Panc1 (cell line): ENCODE measurements at regions of chr3 and their contacts with region 1.

Region 1: GRCh38 chr3:64533617-64534317 is 154.0 kb downstream of the ADAMTS9 start:
- DNase-seq: peak; percentile 38
- ATAC-seq: peak; percentile 97
- H3K4me3 ChIP-seq: no peak overlapping the region
- H3K27ac ChIP-seq: no peak overlapping the region
- H3K4me1 ChIP-seq: no peaks in the 10 kb centered on the region
- H3K27me3 ChIP-seq: peaks cover 8% of the 10 kb centered on the region
- CTCF ChIP-seq: peak; percentile 81

Region 2: GRCh38 chr3:64058566-64058965 is 475.2 kb before region 1 on chr3:
- CTCF ChIA-PET with region 1: interaction called, 22 read pairs
- POLR2A ChIA-PET with region 1: no interaction called
- in situ Hi-C with region 1: no loop called
- intact Hi-C with region 1: no loop called
- DNase-seq: no peak
- ATAC-seq: no peak
- H3K4me3 ChIP-seq: no peak overlapping the region
- H3K27ac ChIP-seq: no peak overlapping the region
- H3K4me1 ChIP-seq: no peaks in the 10 kb centered on the region
- H3K27me3 ChIP-seq: no peaks in the 10 kb centered on the region
- CTCF ChIP-seq: no peak

Region 3: GRCh38 chr3:64666171-64666588 is 132.4 kb after region 1 on chr3:
- CTCF ChIA-PET with region 1: no interaction called
- POLR2A ChIA-PET with region 1: no interaction called
- in situ Hi-C with region 1: no loop called
- intact Hi-C with region 1: no loop called
- DNase-seq: no peak
- ATAC-seq: no peak
- H3K4me3 ChIP-seq: no peak overlapping the region
- H3K27ac ChIP-seq: no peak overlapping the region
- H3K4me1 ChIP-seq: no peaks in the 10 kb centered on the region
- H3K27me3 ChIP-seq: no peaks in the 10 kb centered on the region
- CTCF ChIP-seq: no peak

Region 4: DNA sequence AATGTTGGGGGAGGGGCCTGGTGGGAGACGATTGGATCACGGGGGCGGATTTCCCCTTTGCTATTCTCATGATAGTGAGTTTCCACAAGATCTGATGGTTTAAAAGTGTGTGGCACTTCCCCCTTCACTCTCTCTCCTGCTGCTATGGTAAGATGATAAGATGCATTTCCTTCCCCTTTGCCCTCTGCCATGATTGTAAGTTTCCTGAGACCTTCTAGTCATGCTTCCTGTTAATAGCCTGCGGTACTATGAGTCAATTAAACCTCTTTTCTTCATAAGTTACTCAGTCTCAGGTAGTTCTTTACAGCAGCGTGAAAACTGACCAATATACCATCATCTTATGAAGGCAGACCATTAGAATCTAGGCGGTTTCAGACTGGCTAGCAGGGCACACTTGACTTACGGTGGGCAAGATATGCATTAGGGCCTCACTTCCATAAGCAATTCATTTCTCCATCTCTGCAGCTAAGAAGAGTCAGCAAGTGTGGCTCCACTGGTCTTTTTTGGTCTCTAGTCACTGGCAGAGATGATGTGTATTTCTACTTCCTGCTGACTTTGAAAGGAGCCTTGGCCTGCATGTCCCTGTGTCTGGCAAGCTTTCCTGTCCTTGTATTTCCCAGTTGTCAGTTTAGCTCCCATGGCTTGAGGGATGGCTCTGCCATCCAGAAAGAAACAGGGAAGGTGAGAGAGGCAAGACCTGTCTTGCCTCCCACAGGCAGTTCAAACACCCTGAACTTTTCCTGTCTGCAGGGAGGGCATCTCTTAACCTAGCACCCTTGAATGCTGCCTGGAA is 263.0 kb after region 1 on chr3:
- CTCF ChIA-PET with region 1: no interaction called
- POLR2A ChIA-PET with region 1: no interaction called
- in situ Hi-C with region 1: no loop called
- intact Hi-C with region 1: no loop called
- DNase-seq: no peak
- ATAC-seq: no peak
- H3K4me3 ChIP-seq: no peak overlapping the region
- H3K27ac ChIP-seq: no peak overlapping the region
- H3K4me1 ChIP-seq: no peaks in the 10 kb centered on the region
- H3K27me3 ChIP-seq: no peaks in the 10 kb centered on the region
- CTCF ChIP-seq: no peak

Region 5: GRCh38 chr3:65732051-65732935 is 1198.5 kb after region 1 on chr3:
- CTCF ChIA-PET with region 1: no interaction called
- POLR2A ChIA-PET with region 1: no interaction called
- in situ Hi-C with region 1: no loop called
- intact Hi-C with region 1: loop called (anchors 5 kb)
- DNase-seq: peak; percentile 62
- ATAC-seq: peak; percentile 84
- H3K4me3 ChIP-seq: no peak overlapping the region
- H3K27ac ChIP-seq: no peak overlapping the region
- H3K4me1 ChIP-seq: no peaks in the 10 kb centered on the region
- H3K27me3 ChIP-seq: no peaks in the 10 kb centered on the region
- CTCF ChIP-seq: peak; percentile 80